Ascending aorta (tissue), 2 donors: ENCODE measurements at regions of chr17 and their contacts with region 1.

Region 1: DNA sequence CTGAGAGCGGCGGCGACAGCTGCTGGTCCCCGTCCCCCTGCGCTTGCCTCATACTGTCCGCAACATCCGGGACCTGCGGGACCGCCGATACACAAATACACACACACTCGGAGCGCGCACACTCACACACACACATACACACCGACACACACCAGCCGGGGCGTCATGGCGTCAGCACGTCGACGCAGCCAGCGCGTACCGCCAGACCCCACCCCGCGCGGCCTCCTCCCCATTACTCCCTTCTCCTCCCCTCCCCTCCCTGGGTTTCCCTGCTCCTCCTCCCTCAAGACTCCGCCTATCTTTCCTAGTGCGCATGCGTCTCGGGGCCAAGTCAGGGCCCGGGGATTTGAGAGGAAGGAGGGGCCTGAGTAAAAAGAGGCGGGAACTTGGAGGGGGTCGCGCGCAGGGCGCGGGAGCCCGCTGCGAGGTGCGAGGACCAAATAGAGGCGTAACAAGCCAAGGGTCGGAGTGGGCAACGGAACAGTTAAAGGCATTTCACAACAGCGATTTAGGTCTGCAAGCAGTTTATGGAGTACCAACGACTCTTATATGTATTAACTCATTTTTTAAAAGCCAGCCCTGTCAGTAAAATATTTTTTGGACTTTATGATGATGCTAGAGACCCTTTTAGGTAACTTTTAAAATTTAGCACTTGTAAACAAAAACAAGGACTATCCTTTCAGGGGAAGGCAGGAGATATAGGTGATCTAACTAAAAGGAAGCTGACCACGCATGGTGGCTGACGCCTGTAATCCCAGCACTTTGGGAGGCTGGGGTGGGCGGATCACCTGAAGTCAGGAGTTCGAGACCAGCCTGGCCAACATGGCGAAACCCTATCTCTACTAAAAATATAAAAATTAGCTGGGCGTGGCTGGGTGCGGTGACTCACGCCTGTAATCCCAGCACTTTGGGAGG is at the start of gene SPOP:
- DNase-seq: peak; percentile 96 to 100
- H3K4me3 ChIP-seq: peak within 1 kb of the TSS; percentile 79 to 83
- H3K27ac ChIP-seq: peak within 1 kb of the TSS; percentile 97 to 98
- H3K4me1 ChIP-seq: peaks cover 5 to 32% of the 10 kb centered on the region in 2 donors
- H3K27me3 ChIP-seq: no peaks in the 10 kb centered on the region
- CTCF ChIP-seq: no peak
- total RNA-seq, gene SPOP: 189 TPM

Region 2: DNA sequence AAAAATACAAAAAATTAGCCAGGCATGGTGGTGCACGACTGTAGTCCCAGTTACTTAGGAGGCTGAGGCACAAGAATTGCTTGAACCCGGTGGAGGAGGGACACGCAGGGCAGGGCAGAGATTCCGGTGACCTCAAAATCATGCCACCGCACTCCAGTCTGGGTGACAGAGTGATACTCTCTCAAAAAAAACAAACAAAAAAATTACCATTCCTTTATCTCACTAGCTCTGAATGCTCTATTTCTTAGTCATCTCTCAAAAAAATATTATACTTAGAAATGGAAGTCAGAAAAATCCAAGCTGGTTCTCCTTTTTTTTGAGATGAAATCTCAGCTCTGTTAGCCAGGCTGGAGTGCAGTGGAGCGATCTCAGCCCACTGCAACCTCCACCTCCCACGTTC is 41.1 kb before region 1 on chr17:
- intact Hi-C with region 1: loop called (anchors 5 kb)
- DNase-seq: no peak
- H3K4me3 ChIP-seq: peak overlapping the region in 1 of 2 donors; percentile 17
- H3K27ac ChIP-seq: peak overlapping the region; percentile 88 to 94
- H3K4me1 ChIP-seq: peaks cover 32 to 79% of the 10 kb centered on the region in 2 donors
- H3K27me3 ChIP-seq: no peaks in the 10 kb centered on the region
- CTCF ChIP-seq: no peak

Region 3: GRCh38 chr17:49730078-49730784 is 52.0 kb after region 1 on chr17:
- intact Hi-C with region 1: no loop called
- DNase-seq: peak; percentile 16 to 87
- H3K4me3 ChIP-seq: no peak overlapping the region
- H3K27ac ChIP-seq: peak overlapping the region; percentile 73 to 81
- H3K4me1 ChIP-seq: peaks cover 15 to 29% of the 10 kb centered on the region in 2 donors
- H3K27me3 ChIP-seq: no peaks in the 10 kb centered on the region
- CTCF ChIP-seq: no peak